PC-9 (cell line): ENCODE measurements at regions of chr1 and their contacts with region 1.

Region 1: GRCh38 chr1:214901718-214902117 is 180.8 kb upstream of the KCNK2 start:
- DNase-seq: peak; percentile 33 to 54
- H3K4me3 ChIP-seq: no peak overlapping the region
- H3K27ac ChIP-seq: peak overlapping the region; percentile 79
- H3K4me1 ChIP-seq: peaks cover 24% of the 10 kb centered on the region
- H3K27me3 ChIP-seq: no peaks in the 10 kb centered on the region
- CTCF ChIP-seq: no peak

Region 2: DNA sequence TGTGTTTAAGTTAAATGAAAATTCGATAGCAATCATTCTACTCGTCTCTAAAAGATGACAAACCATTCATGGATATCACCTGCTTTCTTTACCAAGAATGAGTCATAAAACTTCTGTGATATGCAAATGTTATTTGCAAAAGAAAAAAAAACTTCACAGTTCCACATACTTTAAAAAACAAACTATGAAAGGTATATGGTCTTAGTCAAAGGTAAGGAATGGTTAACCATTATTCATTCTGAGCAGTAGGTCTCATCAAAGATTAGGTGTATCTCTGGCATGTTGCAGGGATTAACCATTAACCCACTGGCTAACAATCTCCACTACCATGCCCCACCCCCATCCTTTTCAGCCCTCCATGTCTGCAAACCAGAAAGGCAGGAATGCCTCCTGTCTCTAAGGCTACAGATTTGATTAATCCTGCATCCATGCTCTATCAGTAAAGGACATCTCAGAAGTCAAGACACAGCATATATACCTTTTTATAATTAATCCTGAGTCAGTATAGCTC is 394.7 kb before region 1 on chr1:
- CTCF ChIA-PET with region 1: no interaction called
- POLR2A ChIA-PET with region 1: interaction called, 12 read pairs
- intact Hi-C with region 1: no loop called
- DNase-seq: peak; percentile 75 to 97
- H3K4me3 ChIP-seq: peak overlapping the region; percentile 6; the same call in 1 of the 2 replicates
- H3K27ac ChIP-seq: peak overlapping the region; percentile 13; the same call in 1 of the 2 replicates
- H3K4me1 ChIP-seq: peaks cover 47% of the 10 kb centered on the region
- H3K27me3 ChIP-seq: no peaks in the 10 kb centered on the region
- CTCF ChIP-seq: no peak

Region 3: GRCh38 chr1:215114154-215114933 is 212.6 kb after region 1 on chr1:
- CTCF ChIA-PET with region 1: no interaction called
- POLR2A ChIA-PET with region 1: no interaction called
- intact Hi-C with region 1: loop called (anchors 5 kb)
- DNase-seq: peak; percentile 73 to 97
- H3K4me3 ChIP-seq: no peak overlapping the region; the same call in 1 of the 2 replicates
- H3K27ac ChIP-seq: peak overlapping the region; percentile 92
- H3K4me1 ChIP-seq: peaks cover 42% of the 10 kb centered on the region
- H3K27me3 ChIP-seq: no peaks in the 10 kb centered on the region
- CTCF ChIP-seq: no peak

Region 4: DNA sequence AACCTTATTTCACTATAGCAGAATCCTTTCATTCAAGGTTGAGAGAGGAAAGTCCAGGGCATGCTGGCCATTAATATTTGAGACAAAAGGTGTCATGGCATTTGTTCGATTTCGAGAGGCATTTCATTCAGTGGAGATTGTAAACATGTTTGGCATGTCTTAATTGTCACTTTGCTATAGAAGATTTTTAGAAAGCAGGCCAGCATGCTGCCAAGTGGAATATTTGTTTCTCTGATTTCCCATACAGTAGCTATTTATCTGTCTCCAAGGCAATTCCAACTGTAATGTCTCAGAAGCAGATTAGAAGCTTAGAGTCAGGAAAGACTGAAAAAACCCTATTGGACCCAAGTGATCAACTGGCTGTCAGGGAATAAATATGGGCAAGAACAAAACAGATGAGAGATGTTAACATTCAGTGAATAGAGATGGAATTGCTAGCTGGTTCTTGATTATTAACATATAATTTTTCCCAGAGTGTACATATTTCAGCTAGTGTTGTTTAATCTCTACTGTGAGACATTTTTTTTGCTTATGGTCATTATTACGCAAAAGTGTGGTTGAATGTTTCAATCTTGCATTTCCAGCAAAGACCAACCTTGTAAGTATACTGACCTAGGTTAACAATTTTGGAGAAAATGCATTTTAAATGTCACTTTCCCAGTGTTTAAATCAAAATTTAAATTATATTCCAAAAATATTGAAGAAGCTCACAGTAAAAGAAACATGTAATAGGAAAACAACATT is 355.4 kb after region 1 on chr1:
- CTCF ChIA-PET with region 1: no interaction called
- POLR2A ChIA-PET with region 1: no interaction called
- intact Hi-C with region 1: no loop called
- DNase-seq: no peak
- H3K4me3 ChIP-seq: no peak overlapping the region
- H3K27ac ChIP-seq: no peak overlapping the region
- H3K4me1 ChIP-seq: no peaks in the 10 kb centered on the region
- H3K27me3 ChIP-seq: no peaks in the 10 kb centered on the region
- CTCF ChIP-seq: no peak